Heart right ventricle (tissue), 16 donors: ENCODE measurements at regions of chr12 and their contacts with region 1.

Region 1: DNA sequence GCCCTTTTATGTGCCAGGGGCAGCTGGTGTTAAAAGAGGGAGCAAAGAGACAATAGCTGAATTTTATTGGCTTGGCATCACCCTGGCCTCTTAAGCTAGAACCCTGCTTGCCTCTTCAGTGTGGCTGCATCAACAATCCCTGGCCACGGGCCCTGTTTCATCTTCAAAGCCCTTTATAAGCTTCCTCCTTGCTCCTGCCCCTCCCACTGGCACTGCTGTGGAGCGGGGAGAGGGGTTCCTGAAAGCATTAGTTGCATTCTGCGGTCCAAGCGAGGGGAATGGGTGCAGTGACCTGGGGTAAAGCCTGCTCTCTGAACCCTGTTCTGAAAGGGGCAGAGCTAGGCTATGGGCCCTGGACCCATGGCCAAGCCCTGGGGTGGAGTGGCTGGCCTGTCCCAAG is 220 bp upstream of the KRT83 start:
- DNase-seq: no peak
- ATAC-seq: no peak
- H3K4me3 ChIP-seq: no peak overlapping the region
- H3K27ac ChIP-seq: no peak overlapping the region
- H3K4me1 ChIP-seq: no peaks in the 10 kb centered on the region
- H3K27me3 ChIP-seq: peaks cover 14 to 68% (median 46%) of the 10 kb centered on the region in 7 donors
- CTCF ChIP-seq: no peak

Region 2: DNA sequence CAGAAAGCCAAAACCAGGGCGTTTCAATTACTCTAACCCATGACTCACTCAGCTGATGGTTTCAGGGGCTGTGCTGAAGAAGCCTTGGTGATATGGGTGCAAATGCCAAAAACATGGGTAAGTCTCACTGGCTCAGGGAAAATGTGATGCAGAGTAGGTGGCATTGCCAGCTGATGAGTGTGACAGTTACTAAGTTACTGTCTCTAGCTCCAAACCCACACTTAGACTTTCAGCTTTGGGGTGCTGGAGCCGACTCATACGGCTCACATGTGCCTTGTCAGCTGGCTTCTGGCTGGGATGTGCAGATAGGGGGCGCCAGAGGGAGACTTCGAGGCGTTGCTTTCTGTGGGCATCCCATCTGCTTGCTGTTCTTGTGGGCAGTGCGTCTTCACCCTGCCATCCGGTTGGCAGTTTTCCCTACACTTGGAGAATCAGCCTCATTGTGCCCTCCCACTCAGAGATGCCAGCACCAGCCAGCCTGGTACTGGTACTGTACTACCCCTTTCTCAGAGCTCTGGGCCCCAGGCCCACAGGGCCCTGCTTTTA is 99.4 kb before region 1 on chr12:
- intact Hi-C with region 1: loop called in 2 of 10 experiments (anchors 5 kb)
- DNase-seq: peak in 1 of 2 donors; percentile 49
- ATAC-seq: peak in 3 of 8 donors; percentile 31 to 57 (median 56)
- H3K4me3 ChIP-seq: no peak overlapping the region
- H3K27ac ChIP-seq: no peak overlapping the region
- H3K4me1 ChIP-seq: peaks cover 0 to 11% (median 5%) of the 10 kb centered on the region in 9 donors
- H3K27me3 ChIP-seq: peaks cover 0 to 42% (median 20%) of the 10 kb centered on the region in 7 donors
- CTCF ChIP-seq: peak; percentile 9 to 62 (median 50)